Ovary (tissue), 10 donors: ENCODE measurements at regions of chr14 and their contacts with region 1.

Region 1: GRCh38 chr14:79638672-79639266 is 572.5 kb downstream of the DIO2 start:
- DNase-seq: no peak
- H3K4me3 ChIP-seq: no peak overlapping the region
- H3K27ac ChIP-seq: no peak overlapping the region
- H3K4me1 ChIP-seq: no peaks in the 10 kb centered on the region
- H3K27me3 ChIP-seq: no peaks in the 10 kb centered on the region
- CTCF ChIP-seq: no peak
- EP300 ChIP-seq: no peak
- POLR2A ChIP-seq: no peak

Region 2: DNA sequence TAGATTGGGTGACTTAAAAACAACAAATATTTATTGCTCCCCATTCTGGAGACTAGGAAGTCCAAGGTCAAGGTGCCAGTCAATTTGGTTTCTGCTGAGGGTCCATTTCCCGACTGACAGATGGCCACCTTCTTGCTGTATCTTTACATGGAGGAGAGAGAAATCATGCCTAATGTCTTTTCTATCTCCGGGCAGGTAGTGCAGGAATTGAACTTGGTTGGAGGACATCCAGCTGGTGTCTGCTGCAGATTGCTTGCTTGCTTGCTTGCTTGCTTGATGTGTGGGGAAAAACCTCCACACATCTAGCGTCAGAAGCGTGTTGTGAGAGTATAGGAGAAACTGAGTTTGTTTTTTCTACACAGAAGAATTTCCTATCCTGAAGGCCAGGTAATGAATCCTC is 11.1 kb after region 1 on chr14:
- intact Hi-C with region 1: loop called in 2 of 4 experiments (anchors 2 kb)
- DNase-seq: no peak
- H3K4me3 ChIP-seq: no peak overlapping the region
- H3K27ac ChIP-seq: no peak overlapping the region
- H3K4me1 ChIP-seq: no peaks in the 10 kb centered on the region
- H3K27me3 ChIP-seq: no peaks in the 10 kb centered on the region
- CTCF ChIP-seq: no peak
- EP300 ChIP-seq: no peak
- POLR2A ChIP-seq: no peak